Breast epithelium (tissue), 4 donors: ENCODE measurements at regions of chr2 and their contacts with region 1.

Region 1: DNA sequence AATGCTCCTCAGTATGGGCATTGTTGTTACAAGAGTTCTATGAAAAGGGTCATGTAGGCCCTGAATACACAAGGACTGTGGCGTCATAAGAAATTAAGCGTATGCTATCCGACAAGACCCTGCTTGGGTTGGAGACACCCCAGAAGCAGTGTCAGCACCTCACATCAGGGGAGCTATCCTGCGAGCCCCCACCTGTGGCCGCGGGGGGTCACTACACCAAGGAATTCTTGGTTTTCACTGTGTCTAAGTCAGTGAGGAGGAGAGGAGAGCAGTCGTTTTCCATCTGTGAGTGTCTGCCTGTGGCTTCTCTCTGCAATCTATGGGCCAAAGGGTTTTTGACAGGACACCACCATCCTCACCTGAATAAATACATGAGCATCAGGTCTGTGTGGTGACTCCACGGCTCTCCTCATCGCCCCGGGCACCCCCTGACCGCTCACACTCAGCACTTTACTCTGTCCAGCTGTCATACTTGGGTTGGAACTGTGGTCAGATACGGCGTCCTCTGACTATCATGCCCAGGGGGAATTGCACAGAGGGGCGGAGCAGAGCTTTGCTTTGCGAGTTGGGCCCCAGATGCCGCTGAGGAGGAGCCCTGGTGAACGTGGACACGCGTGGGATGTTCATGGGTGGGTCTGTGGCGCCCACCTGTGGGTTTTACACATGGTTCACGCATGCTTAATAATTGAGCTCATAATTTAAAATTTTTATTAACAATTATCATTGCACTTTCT is 235.5 kb downstream of the MYT1L start:
- DNase-seq: no peak
- H3K4me3 ChIP-seq: no peak overlapping the region
- H3K27ac ChIP-seq: no peak overlapping the region
- H3K4me1 ChIP-seq: no peaks in the 10 kb centered on the region
- H3K27me3 ChIP-seq: no peaks in the 10 kb centered on the region
- CTCF ChIP-seq: no peak
- POLR2A ChIP-seq: no peak

Region 2: DNA sequence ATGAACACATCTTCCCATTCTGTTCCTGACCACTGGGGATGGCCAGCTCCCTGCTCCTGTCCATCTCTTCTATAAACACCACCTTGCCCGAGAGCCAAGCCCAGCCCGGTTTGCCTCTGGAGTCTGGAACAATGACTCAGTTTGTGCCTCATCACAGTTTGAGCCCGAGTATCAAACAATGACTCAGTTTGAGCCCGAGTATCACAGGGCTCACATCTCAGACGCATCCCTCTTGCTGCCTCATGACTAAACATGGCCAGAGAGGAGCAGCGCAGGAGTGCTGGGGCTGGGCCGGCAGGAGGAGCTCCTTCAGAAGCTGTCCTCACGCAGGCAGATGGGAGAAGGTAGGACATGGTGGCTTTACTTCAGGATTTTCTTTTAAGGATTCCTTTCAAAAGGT is 419.9 kb before region 1 on chr2:
- intact Hi-C with region 1: no loop called
- DNase-seq: peak in 1 of 2 donors; percentile 64
- H3K4me3 ChIP-seq: no peak overlapping the region
- H3K27ac ChIP-seq: peak overlapping the region in 1 of 2 donors; percentile 57
- H3K4me1 ChIP-seq: no peaks in the 10 kb centered on the region
- H3K27me3 ChIP-seq: no peaks in the 10 kb centered on the region
- CTCF ChIP-seq: peak in 1 of 3 donors; percentile 26
- POLR2A ChIP-seq: no peak

Region 3: GRCh38 chr2:2889646-2890045 is 794.1 kb after region 1 on chr2:
- intact Hi-C with region 1: loop called (anchors 5 kb)
- DNase-seq: no peak
- H3K4me3 ChIP-seq: no peak overlapping the region
- H3K27ac ChIP-seq: no peak overlapping the region
- H3K4me1 ChIP-seq: no peaks in the 10 kb centered on the region
- H3K27me3 ChIP-seq: no peaks in the 10 kb centered on the region
- CTCF ChIP-seq: no peak
- POLR2A ChIP-seq: no peak